MCF 10A (cell line): ENCODE measurements at regions of chr1 and their contacts with region 1.

Region 1: DNA sequence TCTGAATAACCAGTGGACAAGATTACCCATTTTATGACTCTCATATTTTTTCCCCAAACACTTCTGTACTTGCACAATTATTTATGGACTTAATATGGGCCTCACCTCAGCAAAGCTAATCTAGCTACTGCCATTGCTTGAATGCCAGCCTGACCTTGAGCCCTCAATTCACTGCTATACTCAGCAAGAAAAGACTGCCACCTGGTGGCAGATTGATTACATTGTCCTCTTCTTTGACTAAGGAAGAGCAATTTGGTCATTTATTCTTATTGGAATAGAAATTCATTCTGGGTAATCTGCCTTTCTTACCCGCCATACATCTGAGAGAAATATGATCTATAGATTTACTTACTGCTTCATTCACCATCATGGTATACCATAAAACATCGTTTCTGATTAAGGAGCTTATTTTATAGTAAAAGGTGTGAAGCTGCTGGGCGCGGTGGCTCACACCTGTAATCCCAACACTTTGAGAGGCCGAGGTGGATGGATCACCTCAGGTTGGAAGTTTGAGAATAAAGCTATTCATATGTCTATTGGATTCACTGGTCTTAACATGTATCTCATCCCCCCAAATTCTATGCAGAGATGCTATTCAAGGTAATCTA is 32.9 kb upstream of the DIPK1A start:
- DNase-seq: peak; percentile 85
- H3K4me3 Mint-ChIP-seq: no peak overlapping the region
- H3K27ac Mint-ChIP-seq: no peak overlapping the region
- H3K4me1 Mint-ChIP-seq: peaks cover 5% of the 10 kb centered on the region
- H3K27me3 Mint-ChIP-seq: no peaks in the 10 kb centered on the region
- CTCF ChIP-seq: peak; percentile 71

Region 2: DNA sequence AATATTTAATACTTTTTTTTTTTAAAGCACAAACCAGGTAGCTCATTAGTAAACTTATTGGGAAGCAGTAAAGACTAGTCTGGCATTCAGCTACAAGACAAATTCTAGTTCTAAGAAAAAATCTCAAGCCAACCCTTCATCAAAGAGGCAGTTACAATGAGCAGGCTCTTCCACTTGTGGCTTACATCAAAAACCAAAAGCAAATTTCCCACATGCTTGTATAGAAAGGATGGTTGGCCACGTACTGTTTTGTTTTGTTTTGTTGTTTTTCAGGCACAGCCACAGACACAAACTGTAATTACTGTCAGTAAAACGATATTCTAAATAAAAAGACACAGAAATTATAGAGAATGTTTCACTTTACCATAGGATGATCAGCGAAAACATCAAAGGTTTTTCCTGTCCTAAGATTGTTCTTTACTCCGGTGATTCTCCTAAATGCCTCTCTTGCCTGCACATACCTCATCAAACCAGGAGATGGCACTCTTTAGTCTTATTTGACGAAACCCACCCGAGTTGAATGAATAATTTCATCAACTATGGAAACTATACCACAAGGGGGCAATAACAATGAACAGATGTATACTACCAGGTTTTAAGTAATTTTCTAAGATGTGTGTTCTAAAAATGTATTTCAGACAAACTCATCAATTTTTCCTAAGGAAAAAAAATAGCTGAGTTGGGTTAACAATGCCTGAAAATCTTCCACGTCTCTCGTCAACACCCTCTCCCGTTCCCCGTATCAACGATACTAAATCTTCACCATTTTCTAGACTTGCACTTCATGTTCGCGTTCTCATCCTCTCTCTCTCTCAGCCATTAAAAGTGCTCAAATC is 135.4 kb before region 1 on chr1:
- CTCF ChIA-PET with region 1: interaction called, 150 read pairs
- POLR2A ChIA-PET with region 1: interaction called, 11 read pairs
- intact Hi-C with region 1: loop called (anchors 1 kb)
- DNase-seq: peak; percentile 82
- H3K4me3 Mint-ChIP-seq: no peak overlapping the region
- H3K27ac Mint-ChIP-seq: no peak overlapping the region
- H3K4me1 Mint-ChIP-seq: peaks cover 7% of the 10 kb centered on the region
- H3K27me3 Mint-ChIP-seq: no peaks in the 10 kb centered on the region
- CTCF ChIP-seq: peak; percentile 88

Region 3: GRCh38 chr1:92960395-92961130 is 33.6 kb before region 1 on chr1:
- CTCF ChIA-PET with region 1: interaction called, 114 read pairs
- POLR2A ChIA-PET with region 1: interaction called, 18 read pairs
- intact Hi-C with region 1: loop called (anchors 1 kb)
- DNase-seq: peak; percentile 82
- H3K4me3 Mint-ChIP-seq: peak overlapping the region; percentile 85
- H3K27ac Mint-ChIP-seq: peak overlapping the region; percentile 78
- H3K4me1 Mint-ChIP-seq: peaks cover 4% of the 10 kb centered on the region
- H3K27me3 Mint-ChIP-seq: no peaks in the 10 kb centered on the region
- CTCF ChIP-seq: peak; percentile 35

Region 4: GRCh38 chr1:92980732-92981647 is 13.2 kb before region 1 on chr1:
- CTCF ChIA-PET with region 1: interaction called, 30 read pairs
- POLR2A ChIA-PET with region 1: interaction called, 3 read pairs
- intact Hi-C with region 1: no loop called
- DNase-seq: no peak
- H3K4me3 Mint-ChIP-seq: no peak overlapping the region
- H3K27ac Mint-ChIP-seq: no peak overlapping the region
- H3K4me1 Mint-ChIP-seq: no peaks in the 10 kb centered on the region
- H3K27me3 Mint-ChIP-seq: no peaks in the 10 kb centered on the region
- CTCF ChIP-seq: no peak

Region 5: DNA sequence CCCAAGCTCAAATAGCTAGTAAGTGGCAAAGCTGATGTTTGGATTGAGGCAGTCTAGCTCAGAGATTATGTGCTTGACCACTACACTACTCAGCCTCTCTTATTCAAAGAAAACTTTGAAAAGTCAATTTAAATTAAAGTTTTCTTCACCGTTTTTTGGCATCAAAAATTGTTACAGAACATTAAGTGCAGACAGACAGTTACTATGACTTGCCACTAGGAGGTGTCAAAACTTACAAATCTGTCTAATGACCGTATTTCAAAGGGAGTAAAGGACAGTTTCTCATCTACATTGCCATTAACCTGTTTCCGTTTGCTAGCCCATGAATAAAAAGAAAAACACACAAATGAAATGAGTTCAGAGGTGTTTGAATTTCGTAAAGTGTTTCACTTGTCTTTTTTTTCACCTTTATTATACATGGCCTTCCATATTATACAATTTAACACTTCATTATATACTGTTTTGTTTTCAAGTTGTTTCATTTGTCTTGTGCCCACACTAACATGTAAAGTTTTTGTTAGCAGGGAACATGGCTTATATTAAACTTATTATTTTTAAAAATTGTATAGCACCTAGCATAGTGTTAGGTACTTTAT is 27.4 kb after region 1 on chr1:
- CTCF ChIA-PET with region 1: interaction called, 21 read pairs
- POLR2A ChIA-PET with region 1: no interaction called
- intact Hi-C with region 1: no loop called
- DNase-seq: peak; percentile 60
- H3K4me3 Mint-ChIP-seq: no peak overlapping the region
- H3K27ac Mint-ChIP-seq: no peak overlapping the region
- H3K4me1 Mint-ChIP-seq: peaks cover under 1% of the 10 kb centered on the region
- H3K27me3 Mint-ChIP-seq: peaks cover 69% of the 10 kb centered on the region
- CTCF ChIP-seq: peak; percentile 45